Prostate gland (tissue), 2 donors: ENCODE measurements at regions of chr7 and their contacts with region 1.

Region 1: DNA sequence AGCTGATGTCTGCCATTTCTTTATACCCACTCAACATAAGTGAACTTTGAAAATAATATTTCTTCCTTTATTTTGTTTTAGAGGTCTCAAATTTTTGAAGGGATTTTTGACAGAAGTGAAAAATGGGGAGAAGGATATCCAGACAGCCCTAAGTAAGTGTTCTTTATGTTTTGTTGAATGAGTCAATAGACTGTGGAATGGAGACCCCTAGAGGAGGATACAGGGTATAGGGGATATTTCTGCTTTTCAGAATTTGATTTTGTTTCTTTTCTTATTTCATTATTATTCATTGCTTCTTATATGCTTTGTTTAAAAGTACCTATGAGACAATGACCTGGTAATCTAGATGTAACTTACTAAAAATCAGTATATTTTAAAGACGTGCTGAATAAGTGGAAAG is 34.4 kb downstream of the PLEKHA8 start:
- DNase-seq: no peak
- H3K4me3 ChIP-seq: no peak overlapping the region
- H3K27ac ChIP-seq: no peak overlapping the region
- H3K4me1 ChIP-seq: peaks cover 2% of the 10 kb centered on the region
- H3K27me3 ChIP-seq: no peaks in the 10 kb centered on the region
- CTCF ChIP-seq: peak in 3 of 4 experiments; percentile 43 to 58 (median 57)
- POLR2A ChIP-seq: no peak

Region 2: DNA sequence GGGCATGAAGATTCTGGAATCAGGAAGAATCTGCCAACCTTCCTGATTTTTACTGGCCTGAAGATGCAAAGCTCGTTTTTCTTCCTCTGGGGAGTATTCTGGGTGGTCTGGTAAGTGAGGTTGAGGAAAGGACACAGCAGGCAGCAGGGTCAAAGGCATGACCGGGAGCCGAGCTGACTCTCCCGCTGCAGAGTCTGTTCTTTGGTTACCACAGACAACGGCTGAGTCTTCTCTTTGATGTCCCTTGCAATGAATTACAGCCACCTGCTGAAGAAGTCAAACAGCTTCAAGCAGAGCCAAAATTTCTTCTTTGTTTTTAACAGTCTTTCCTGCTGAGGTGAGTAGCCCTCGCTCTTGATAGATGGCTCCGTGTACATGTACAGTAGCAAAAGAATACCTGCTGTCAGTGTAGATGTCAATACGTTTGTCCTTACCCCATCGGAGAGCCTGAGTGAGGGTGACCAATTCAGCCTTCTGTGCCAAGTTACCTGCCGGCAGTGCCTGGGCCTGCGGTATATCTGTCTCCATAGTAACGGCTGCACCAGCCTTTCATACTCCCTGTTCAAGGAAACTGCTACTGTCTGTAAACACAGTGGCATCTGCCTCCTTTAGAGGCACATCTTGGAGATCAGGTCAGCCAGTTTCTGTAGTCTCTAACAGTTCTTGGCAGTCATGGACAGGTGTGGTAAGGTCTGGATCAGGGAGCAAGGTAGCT is 422.6 kb before region 1 on chr7:
- intact Hi-C with region 1: loop called (anchors 10 kb)
- DNase-seq: no peak
- H3K4me3 ChIP-seq: no peak overlapping the region
- H3K27ac ChIP-seq: no peak overlapping the region
- H3K4me1 ChIP-seq: no peaks in the 10 kb centered on the region
- H3K27me3 ChIP-seq: no peaks in the 10 kb centered on the region
- CTCF ChIP-seq: no peak
- POLR2A ChIP-seq: no peak

Region 3: GRCh38 chr7:29748286-29749108 is 314.1 kb before region 1 on chr7:
- intact Hi-C with region 1: loop called (anchors 5 kb)
- DNase-seq: no peak
- H3K4me3 ChIP-seq: no peak overlapping the region
- H3K27ac ChIP-seq: no peak overlapping the region
- H3K4me1 ChIP-seq: no peaks in the 10 kb centered on the region
- H3K27me3 ChIP-seq: no peaks in the 10 kb centered on the region
- CTCF ChIP-seq: peak in 3 of 4 experiments; percentile 40 to 59 (median 44)
- POLR2A ChIP-seq: no peak

Region 4: DNA sequence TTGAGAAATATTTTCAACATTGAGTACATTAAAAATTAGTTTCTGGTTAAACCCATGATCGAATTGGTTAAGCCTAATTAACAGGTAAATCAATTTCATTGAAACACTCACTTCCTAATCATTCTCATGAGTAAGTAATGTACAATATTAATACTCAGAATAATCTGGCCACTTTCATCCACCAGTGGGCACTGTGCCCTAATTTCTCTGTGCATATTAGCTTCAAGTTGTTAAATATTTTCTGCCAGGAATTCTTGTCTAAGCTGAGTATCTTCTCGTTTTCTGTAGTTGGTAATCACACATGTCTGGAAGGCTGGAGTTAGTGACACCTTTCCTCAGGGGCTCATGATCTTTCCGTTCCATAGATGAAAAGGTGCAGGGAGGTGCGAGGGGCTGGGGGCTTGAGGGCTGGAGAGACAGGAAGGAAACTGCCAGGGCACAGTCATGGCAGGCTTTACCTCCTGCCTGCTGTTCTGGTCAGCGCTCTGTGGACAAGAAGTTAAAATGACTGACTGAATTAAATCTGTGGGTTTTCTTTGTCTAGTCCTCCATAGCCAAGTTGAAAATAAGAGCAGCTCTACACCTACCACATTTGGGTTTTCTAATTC is 184.4 kb before region 1 on chr7:
- intact Hi-C with region 1: loop called (anchors 5 kb)
- DNase-seq: peak; percentile 43
- H3K4me3 ChIP-seq: no peak overlapping the region
- H3K27ac ChIP-seq: no peak overlapping the region
- H3K4me1 ChIP-seq: no peaks in the 10 kb centered on the region
- H3K27me3 ChIP-seq: peaks cover 3% of the 10 kb centered on the region
- CTCF ChIP-seq: peak; percentile 20 to 75 (median 62)
- POLR2A ChIP-seq: no peak

Region 5: DNA sequence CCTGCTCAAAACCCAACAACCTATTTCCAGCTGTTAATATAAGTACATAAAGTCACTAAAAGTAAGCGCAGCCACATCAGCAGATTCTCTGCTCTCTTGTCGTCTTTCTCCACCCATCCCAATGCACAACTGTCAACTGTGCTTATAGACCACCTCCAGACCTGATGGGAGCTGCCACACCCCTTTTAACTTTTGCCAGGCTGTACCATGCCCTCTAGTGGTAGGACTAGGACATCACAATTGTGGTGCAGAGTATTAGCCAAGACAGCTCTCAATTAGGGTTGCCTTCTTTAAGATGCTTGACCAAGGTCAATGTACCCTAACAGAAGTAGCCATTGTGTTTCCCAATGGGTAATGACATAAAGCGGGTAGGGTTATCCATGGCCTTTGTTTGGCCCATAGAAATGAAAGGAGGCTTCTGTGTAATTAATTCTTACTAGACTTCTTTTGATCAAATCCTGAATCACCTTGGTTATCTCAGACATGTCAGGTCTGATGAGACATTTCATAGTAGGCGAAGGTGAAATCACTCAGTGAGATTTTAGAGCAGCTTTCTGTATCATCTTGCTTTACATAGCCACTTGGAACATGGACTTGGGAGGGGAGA is 141.1 kb before region 1 on chr7:
- intact Hi-C with region 1: loop called (anchors 5 kb)
- DNase-seq: peak; percentile 39
- H3K4me3 ChIP-seq: no peak overlapping the region
- H3K27ac ChIP-seq: no peak overlapping the region
- H3K4me1 ChIP-seq: no peaks in the 10 kb centered on the region
- H3K27me3 ChIP-seq: no peaks in the 10 kb centered on the region
- CTCF ChIP-seq: peak; percentile 75 to 93 (median 81)
- POLR2A ChIP-seq: no peak

Region 6: GRCh38 chr7:30026229-30027064 is 36.1 kb before region 1 on chr7 and contains the start of gene FKBP14:
- intact Hi-C with region 1: loop called (anchors 5 kb)
- DNase-seq: peak; percentile 98
- H3K4me3 ChIP-seq: peak within 1 kb of the TSS; percentile 76 to 84
- H3K27ac ChIP-seq: peak within 1 kb of the TSS; percentile 85 to 86
- H3K4me1 ChIP-seq: peaks cover 3% of the 10 kb centered on the region
- H3K27me3 ChIP-seq: no peaks in the 10 kb centered on the region
- CTCF ChIP-seq: peak in 1 of 4 experiments; percentile 5
- POLR2A ChIP-seq: no peak
- total RNA-seq, gene FKBP14: 8.4 to 9.5 TPM

Region 7: DNA sequence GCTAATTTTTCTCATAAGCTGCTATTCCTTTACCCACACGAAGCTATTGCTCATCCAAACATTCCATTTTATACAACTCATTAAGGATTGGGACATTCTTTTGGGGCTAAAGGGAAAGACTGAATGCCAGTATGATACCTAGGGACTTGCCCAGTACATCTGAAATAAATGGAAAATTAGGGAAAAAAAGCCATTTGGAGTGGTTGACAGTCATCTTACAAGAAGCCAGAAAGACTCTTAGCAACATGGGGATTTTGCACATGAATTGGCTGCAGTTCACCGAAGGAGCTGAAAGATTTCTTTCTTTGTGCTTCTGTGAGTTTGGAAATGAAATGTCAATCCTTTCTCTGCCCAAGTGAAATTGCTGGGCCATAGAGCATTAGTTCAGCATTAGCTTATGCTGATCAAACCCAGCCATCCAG is 28.9 kb after region 1 on chr7:
- intact Hi-C with region 1: no loop called
- DNase-seq: no peak
- H3K4me3 ChIP-seq: no peak overlapping the region
- H3K27ac ChIP-seq: no peak overlapping the region
- H3K4me1 ChIP-seq: no peaks in the 10 kb centered on the region
- H3K27me3 ChIP-seq: no peaks in the 10 kb centered on the region
- CTCF ChIP-seq: no peak
- POLR2A ChIP-seq: no peak

Region 8: DNA sequence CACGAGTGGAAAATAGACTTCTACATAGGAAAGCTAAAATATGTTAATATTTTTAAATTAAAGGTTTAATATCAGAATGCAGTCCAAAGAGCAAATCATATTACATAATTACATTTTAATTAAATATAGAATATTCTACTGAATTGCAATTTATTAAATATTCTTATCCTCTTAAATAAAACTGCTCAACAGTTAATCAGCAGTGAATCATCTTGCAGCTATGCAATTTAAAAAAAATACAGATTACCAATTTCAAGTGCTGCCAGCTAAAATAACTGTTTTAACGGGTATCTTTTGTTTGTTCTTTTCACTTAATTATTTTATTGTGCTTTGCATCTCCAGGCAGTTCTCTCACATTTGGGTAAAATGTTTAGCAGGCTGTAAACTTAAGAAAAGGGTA is 304.0 kb after region 1 on chr7:
- intact Hi-C with region 1: no loop called
- DNase-seq: no peak
- H3K4me3 ChIP-seq: no peak overlapping the region
- H3K27ac ChIP-seq: no peak overlapping the region
- H3K4me1 ChIP-seq: no peaks in the 10 kb centered on the region
- H3K27me3 ChIP-seq: no peaks in the 10 kb centered on the region
- CTCF ChIP-seq: no peak
- POLR2A ChIP-seq: no peak